ENCODE measurements at regions of chrX and their contacts with region 1.

Region 1: DNA sequence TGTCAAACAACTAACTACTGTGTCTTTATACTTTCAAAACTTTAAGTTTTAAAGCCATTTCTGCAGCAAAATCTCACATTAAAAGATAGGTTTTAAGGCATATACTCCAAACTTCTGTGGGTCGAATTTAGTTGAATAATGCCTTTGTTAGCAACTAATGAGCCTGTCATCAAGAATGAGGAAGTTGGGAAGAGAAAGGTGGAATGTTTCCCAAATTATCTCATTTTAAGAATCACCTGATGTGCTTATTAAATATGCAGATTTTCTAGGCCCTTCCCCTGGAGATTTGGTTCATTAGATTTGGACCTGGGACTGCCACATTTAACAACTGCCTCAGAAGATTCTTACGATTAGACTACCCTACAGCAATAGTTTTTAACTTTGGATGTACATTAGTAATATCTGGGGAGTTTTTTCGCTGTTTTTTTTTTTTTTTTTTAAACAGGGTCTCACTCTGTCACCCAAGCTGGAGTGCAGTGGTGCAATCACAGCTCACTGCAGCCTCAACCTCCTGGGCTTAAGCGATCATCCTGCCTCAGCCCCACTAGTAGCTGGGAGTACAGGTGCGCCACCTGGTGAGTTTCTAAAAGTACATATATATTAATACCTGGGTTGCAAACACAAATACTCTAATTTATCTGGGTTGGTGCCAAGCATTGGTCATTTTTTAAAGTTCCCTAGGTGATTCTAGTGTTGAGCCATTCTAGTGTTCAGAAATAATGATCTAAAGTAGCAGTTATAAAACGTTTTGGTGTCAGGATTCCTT is 16.1 kb upstream of the TASL start:
- DNase-seq: no peak
- ATAC-seq: peak; percentile 72
- H3K4me3 ChIP-seq: no peak overlapping the region
- H3K27ac ChIP-seq: peak overlapping the region; percentile 64
- H3K4me1 ChIP-seq: peaks cover 53% of the 10 kb centered on the region
- H3K27me3 ChIP-seq: no peaks in the 10 kb centered on the region
- CTCF ChIP-seq: peak; percentile 28 to 57 (median 31); a peak in 4 of 6 replicates
- EP300 ChIP-seq: no peak
- POLR2A ChIP-seq: no peak
- RAD21 ChIP-seq: peak; percentile 73

Region 2: DNA sequence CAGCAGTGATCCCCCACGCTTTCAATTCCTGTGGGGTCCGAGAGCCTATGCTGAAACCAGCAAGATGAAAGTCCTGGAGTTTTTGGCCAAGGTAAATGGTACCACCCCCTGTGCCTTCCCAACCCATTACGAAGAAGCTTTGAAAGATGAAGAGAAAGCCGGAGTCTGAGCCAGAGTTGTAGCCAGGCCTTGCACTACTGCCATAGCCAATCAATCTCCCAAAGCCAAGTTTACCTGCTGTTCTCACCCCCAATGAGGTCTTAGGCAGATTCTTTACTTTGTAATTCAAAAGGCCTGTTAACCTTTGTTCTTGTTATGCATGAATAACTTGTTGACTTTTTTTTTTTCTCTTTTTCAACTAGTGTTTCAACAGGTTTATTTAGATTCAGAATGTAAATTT is 374.2 kb before region 1 on chrX:
- CTCF ChIA-PET with region 1: no interaction called
- POLR2A ChIA-PET with region 1: no interaction called
- RAD21 ChIA-PET with region 1: no interaction called
- SMC1A ChIA-PET with region 1: no interaction called
- in situ Hi-C with region 1: no loop called
- intact Hi-C with region 1: no loop called
- DNase-seq: no peak
- ATAC-seq: no peak
- H3K4me3 ChIP-seq: no peak overlapping the region
- H3K27ac ChIP-seq: no peak overlapping the region
- H3K4me1 ChIP-seq: no peaks in the 10 kb centered on the region
- H3K27me3 ChIP-seq: no peaks in the 10 kb centered on the region
- CTCF ChIP-seq: no peak
- EP300 ChIP-seq: no peak
- POLR2A ChIP-seq: no peak
- RAD21 ChIP-seq: no peak

Region 3: GRCh38 chrX:30513284-30513683 is 80.3 kb before region 1 on chrX:
- CTCF ChIA-PET with region 1: interaction called, 17 read pairs
- POLR2A ChIA-PET with region 1: no interaction called
- RAD21 ChIA-PET with region 1: interaction called, 3 read pairs
- SMC1A ChIA-PET with region 1: interaction called, 14 read pairs
- in situ Hi-C with region 1: no loop called
- intact Hi-C with region 1: loop called (anchors 1 kb)
- DNase-seq: no peak
- ATAC-seq: peak; percentile 84
- H3K4me3 ChIP-seq: no peak overlapping the region
- H3K27ac ChIP-seq: no peak overlapping the region
- H3K4me1 ChIP-seq: no peaks in the 10 kb centered on the region
- H3K27me3 ChIP-seq: no peaks in the 10 kb centered on the region
- CTCF ChIP-seq: peak; percentile 51 to 61 (median 57)
- EP300 ChIP-seq: no peak
- POLR2A ChIP-seq: no peak
- RAD21 ChIP-seq: peak; percentile 40

Region 4: DNA sequence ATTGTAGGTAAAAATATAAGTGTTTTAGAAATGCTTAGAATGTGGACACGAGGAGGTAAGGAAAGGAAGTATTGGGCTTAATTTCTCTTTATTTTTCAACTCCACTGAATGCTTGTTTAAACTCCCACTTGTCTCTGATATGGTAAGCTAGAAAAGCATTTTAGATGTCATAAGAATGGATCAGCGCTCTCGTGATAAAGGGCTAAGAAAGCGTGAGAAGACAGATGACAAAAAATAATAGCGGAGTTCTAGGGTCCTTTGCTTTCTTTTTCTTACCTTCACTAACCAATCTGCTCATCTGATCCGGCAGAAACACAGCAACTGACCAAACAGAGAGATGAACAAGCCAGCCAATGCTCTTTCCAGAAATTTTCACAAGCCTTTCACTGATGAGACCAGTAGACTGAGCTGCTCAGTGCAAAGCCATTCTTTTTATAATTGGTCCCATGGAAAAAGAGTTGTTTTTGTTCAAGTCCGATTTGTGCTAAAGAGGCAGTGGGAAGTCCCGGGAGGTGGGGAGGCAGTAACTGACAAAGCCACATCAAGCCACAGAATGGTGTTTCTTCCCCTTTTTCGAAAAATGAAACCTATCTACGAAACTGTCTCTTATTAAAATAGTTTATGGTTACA is 16.1 kb before region 1 on chrX and contains the start of gene TASL:
- CTCF ChIA-PET with region 1: interaction called, 282 read pairs
- POLR2A ChIA-PET with region 1: interaction called, 32 read pairs
- RAD21 ChIA-PET with region 1: interaction called, 163 read pairs
- SMC1A ChIA-PET with region 1: interaction called, 208 read pairs
- in situ Hi-C with region 1: no loop called
- intact Hi-C with region 1: loop called (anchors 1 kb)
- DNase-seq: peak; percentile 94
- ATAC-seq: peak; percentile 83
- H3K4me3 ChIP-seq: peak within 1 kb of the TSS; percentile 98
- H3K27ac ChIP-seq: peak within 1 kb of the TSS; percentile 99
- H3K4me1 ChIP-seq: peaks cover 16% of the 10 kb centered on the region
- H3K27me3 ChIP-seq: no peaks in the 10 kb centered on the region
- CTCF ChIP-seq: no peak
- EP300 ChIP-seq: peak; percentile 94 to 96
- POLR2A ChIP-seq: peak; percentile 60
- RAD21 ChIP-seq: no peak
- polyA plus RNA-seq, gene TASL: 18.2 to 19.4 TPM

Region 5: GRCh38 chrX:31459361-31459760 is 865.7 kb after region 1 on chrX:
- CTCF ChIA-PET with region 1: no interaction called
- POLR2A ChIA-PET with region 1: no interaction called
- RAD21 ChIA-PET with region 1: no interaction called
- SMC1A ChIA-PET with region 1: no interaction called
- in situ Hi-C with region 1: no loop called
- intact Hi-C with region 1: no loop called
- DNase-seq: no peak
- ATAC-seq: no peak
- H3K4me3 ChIP-seq: no peak overlapping the region
- H3K27ac ChIP-seq: no peak overlapping the region
- H3K4me1 ChIP-seq: no peaks in the 10 kb centered on the region
- H3K27me3 ChIP-seq: no peaks in the 10 kb centered on the region
- CTCF ChIP-seq: no peak
- EP300 ChIP-seq: no peak
- POLR2A ChIP-seq: no peak
- RAD21 ChIP-seq: no peak